B cell (primary cell): ENCODE measurements at regions of chr18 and their contacts with region 1.

Region 1: GRCh38 chr18:23586249-23587196 is at the start of gene NPC1:
- DNase-seq: peak; percentile 93
- ATAC-seq: peak; percentile 87
- H3K4me3 ChIP-seq: peak within 1 kb of the TSS; percentile 79 to 99 (median 97)
- H3K4me3 Mint-ChIP-seq: peak within 1 kb of the TSS; percentile 93
- H3K27ac ChIP-seq: peak within 1 kb of the TSS; percentile 99
- H3K27ac Mint-ChIP-seq: peak within 1 kb of the TSS; percentile 97
- H3K4me1 ChIP-seq: peaks cover 13 to 21% of the 10 kb centered on the region in 2 donors
- H3K4me1 Mint-ChIP-seq: peaks cover 23% of the 10 kb centered on the region
- H3K27me3 ChIP-seq: no peaks in the 10 kb centered on the region
- H3K27me3 Mint-ChIP-seq: no peaks in the 10 kb centered on the region
- CTCF ChIP-seq: peak; percentile 95
- total RNA-seq, gene NPC1: 44.4 and 48.5 TPM in 2 replicates

Region 2: GRCh38 chr18:22800551-22800951 is 786.0 kb before region 1 on chr18:
- CTCF ChIA-PET with region 1: interaction called, 8 read pairs
- POLR2A ChIA-PET with region 1: no interaction called
- intact Hi-C with region 1: loop called (anchors 2 kb)
- DNase-seq: no peak
- ATAC-seq: no peak
- H3K4me3 ChIP-seq: no peak overlapping the region
- H3K4me3 Mint-ChIP-seq: no peak overlapping the region
- H3K27ac ChIP-seq: no peak overlapping the region
- H3K27ac Mint-ChIP-seq: no peak overlapping the region
- H3K4me1 ChIP-seq: no peaks in the 10 kb centered on the region
- H3K4me1 Mint-ChIP-seq: no peaks in the 10 kb centered on the region
- H3K27me3 ChIP-seq: peaks cover 0 to 2% (median 0%) of the 10 kb centered on the region in 4 experiments
- H3K27me3 Mint-ChIP-seq: no peaks in the 10 kb centered on the region
- CTCF ChIP-seq: no peak

Region 3: DNA sequence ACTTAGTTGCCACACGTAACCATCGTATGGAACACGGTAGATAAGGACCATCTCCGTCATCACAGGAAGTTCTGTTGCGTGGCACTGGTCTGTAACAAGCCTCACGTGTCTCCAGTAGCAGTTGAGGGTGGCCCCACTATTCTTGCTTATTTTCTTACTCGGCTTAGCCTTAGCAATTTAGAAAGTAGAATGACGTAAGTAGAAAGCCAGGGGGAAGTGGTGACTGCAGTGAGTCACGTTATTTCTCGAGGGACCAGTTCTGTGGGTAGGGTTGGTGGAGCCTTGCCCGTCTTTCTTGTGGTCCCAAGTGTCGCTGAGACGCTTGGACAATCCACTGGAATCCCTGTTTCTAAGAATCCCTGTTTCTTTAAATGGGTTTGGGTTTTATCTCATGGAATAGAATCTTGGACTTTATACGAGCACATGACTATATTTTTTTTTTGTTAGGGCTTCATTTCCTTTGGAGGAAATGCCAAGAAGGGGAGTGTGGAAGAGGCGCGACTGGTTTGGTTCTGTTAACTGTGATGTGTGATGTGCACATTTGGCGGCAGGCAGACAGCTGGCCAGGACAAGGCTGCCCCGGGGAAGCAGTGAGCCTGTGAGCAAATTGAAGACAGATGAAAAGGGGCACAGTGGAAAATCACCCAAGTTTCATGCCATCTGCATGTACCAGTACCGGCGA is 355.0 kb before region 1 on chr18:
- CTCF ChIA-PET with region 1: no interaction called
- POLR2A ChIA-PET with region 1: no interaction called
- intact Hi-C with region 1: loop called (anchors 10 kb)
- DNase-seq: peak; percentile 96
- ATAC-seq: peak; percentile 76
- H3K4me3 ChIP-seq: peak overlapping the region in 3 of 5 experiments; percentile 4 to 14 (median 5)
- H3K4me3 Mint-ChIP-seq: peak overlapping the region; percentile 82
- H3K27ac ChIP-seq: peak overlapping the region; percentile 71 to 78
- H3K27ac Mint-ChIP-seq: peak overlapping the region; percentile 97
- H3K4me1 ChIP-seq: peaks cover 41 to 47% of the 10 kb centered on the region in 2 donors
- H3K4me1 Mint-ChIP-seq: peaks cover 66% of the 10 kb centered on the region
- H3K27me3 ChIP-seq: peaks cover 0 to 12% (median 0%) of the 10 kb centered on the region in 4 experiments
- H3K27me3 Mint-ChIP-seq: no peaks in the 10 kb centered on the region
- CTCF ChIP-seq: no peak

Region 4: GRCh38 chr18:23452728-23453679 is 133.5 kb before region 1 on chr18 and contains the start of gene RIOK3:
- CTCF ChIA-PET with region 1: interaction called, 5 read pairs
- POLR2A ChIA-PET with region 1: no interaction called
- intact Hi-C with region 1: loop called (anchors 1 kb)
- DNase-seq: peak; percentile 93
- ATAC-seq: peak; percentile 96
- H3K4me3 ChIP-seq: peak within 1 kb of the TSS; percentile 78 to 94 (median 89)
- H3K4me3 Mint-ChIP-seq: peak within 1 kb of the TSS; percentile 100
- H3K27ac ChIP-seq: peak within 1 kb of the TSS; percentile 84 to 96
- H3K27ac Mint-ChIP-seq: peak within 1 kb of the TSS; percentile 90
- H3K4me1 ChIP-seq: peaks cover 34 to 36% of the 10 kb centered on the region in 2 donors
- H3K4me1 Mint-ChIP-seq: peaks cover 59% of the 10 kb centered on the region
- H3K27me3 ChIP-seq: no peaks in the 10 kb centered on the region
- H3K27me3 Mint-ChIP-seq: no peaks in the 10 kb centered on the region
- CTCF ChIP-seq: no peak
- total RNA-seq, gene RIOK3: 83.4 and 85.1 TPM in 2 replicates

Region 5: DNA sequence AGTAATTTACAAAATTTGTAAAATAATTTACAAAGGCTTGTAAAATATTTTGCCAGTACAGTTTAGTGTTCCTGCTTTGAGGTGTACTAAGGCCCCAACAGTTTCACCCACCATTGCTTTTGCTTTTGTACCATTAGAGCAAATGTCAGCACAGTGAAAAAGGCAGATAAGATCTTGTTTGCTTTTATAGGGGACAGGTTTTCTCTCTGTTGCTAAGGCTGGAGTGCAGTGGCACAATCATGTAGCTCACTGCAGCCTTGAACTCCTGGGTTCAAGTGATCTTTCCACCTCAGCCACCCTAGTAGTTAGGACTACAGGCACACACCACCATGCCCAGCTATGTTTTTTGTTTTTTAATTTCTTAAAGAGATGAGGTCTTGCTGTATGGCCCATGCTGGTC is 19.4 kb after region 1 on chr18:
- CTCF ChIA-PET with region 1: no interaction called
- POLR2A ChIA-PET with region 1: no interaction called
- intact Hi-C with region 1: no loop called
- DNase-seq: no peak
- ATAC-seq: no peak
- H3K4me3 ChIP-seq: no peak overlapping the region
- H3K4me3 Mint-ChIP-seq: no peak overlapping the region
- H3K27ac ChIP-seq: no peak overlapping the region
- H3K27ac Mint-ChIP-seq: no peak overlapping the region
- H3K4me1 ChIP-seq: no peaks in the 10 kb centered on the region
- H3K4me1 Mint-ChIP-seq: no peaks in the 10 kb centered on the region
- H3K27me3 ChIP-seq: peaks cover 0 to 2% (median 0%) of the 10 kb centered on the region in 4 experiments
- H3K27me3 Mint-ChIP-seq: no peaks in the 10 kb centered on the region
- CTCF ChIP-seq: no peak

Region 6: DNA sequence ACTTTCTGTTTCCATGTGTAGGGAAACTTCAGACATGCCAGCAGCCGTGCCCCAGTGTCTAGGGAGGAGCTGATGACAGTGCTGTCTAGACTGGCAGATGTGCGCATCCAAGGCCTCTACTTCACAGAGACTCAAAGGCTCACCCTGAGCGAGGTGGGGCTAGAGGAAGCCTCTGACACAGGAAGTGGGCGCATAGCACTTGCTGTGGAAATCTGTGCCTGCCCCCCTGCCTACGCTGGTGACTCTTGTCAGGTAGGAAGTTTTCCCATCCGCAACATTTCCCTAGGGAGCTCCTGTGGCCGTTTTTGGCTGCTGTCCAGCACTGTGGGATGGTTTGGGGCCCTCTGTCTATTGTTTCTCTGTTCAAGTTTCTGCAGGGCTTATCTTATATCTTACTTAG is 284.9 kb after region 1 on chr18:
- CTCF ChIA-PET with region 1: no interaction called
- POLR2A ChIA-PET with region 1: no interaction called
- intact Hi-C with region 1: no loop called
- DNase-seq: peak; percentile 50
- ATAC-seq: peak; percentile 80
- H3K4me3 ChIP-seq: no peak overlapping the region
- H3K4me3 Mint-ChIP-seq: peak overlapping the region; percentile 43
- H3K27ac ChIP-seq: peak overlapping the region in 1 of 2 donors; percentile 33
- H3K27ac Mint-ChIP-seq: peak overlapping the region; percentile 69
- H3K4me1 ChIP-seq: peaks cover 22 to 33% of the 10 kb centered on the region in 2 donors
- H3K4me1 Mint-ChIP-seq: peaks cover 35% of the 10 kb centered on the region
- H3K27me3 ChIP-seq: no peaks in the 10 kb centered on the region
- H3K27me3 Mint-ChIP-seq: peaks cover 7% of the 10 kb centered on the region
- CTCF ChIP-seq: no peak

Region 7: DNA sequence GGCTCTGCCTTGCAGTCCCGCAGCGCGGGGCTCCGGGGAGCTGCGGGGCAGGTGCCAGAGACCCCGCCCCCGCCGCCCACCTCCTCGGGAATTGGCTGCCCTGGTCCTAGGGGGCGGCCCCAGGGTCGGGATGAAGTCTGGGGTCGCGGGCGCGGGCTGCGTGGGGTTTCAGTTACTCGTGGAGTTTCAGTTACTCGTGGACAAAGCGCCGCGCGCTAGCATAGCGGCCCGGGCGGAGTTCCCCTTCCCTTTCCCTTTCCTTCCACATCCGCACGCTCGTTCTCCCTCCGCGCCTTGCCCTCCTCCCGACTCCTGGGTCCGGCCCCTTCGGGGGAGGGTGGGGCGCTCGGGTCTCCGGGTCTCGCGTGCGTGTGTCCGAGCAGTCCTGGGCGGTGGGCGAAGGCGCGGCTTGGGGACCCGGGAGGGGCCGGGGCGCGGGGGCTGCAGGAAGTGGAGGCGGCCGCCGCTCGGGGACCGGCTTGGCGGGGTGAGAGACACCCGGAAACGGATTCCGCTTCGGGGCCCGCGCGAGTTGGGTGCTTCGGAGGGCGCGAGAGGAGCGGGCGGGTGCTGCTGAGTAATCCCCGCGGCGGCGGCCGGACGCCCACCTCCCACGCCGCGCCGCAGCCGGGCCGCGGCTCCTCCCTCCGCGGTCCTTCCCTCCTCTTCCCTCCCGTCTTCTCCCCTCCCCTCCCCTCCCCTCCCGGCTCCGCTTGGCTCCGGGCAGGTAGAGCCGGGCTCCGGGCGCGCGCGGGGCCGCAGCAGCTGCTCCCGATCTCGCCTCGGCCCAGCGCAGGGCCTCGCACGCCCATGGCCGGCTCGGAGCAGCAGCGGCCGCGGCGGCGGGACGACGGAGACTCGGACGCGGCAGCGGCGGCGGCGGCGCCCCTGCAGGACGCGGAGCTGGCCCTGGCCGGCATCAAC is 427.8 kb after region 1 on chr18 and contains the start of gene TTC39C:
- CTCF ChIA-PET with region 1: no interaction called
- POLR2A ChIA-PET with region 1: no interaction called
- intact Hi-C with region 1: loop called (anchors 5 kb)
- DNase-seq: peak; percentile 81
- ATAC-seq: peak; percentile 63
- H3K4me3 ChIP-seq: peak within 1 kb of the TSS; percentile 77 to 85 (median 78)
- H3K4me3 Mint-ChIP-seq: peak within 1 kb of the TSS; percentile 91
- H3K27ac ChIP-seq: peak within 1 kb of the TSS; percentile 78 to 80
- H3K27ac Mint-ChIP-seq: peak within 1 kb of the TSS; percentile 85
- H3K4me1 ChIP-seq: peaks cover 72 to 85% of the 10 kb centered on the region in 2 donors
- H3K4me1 Mint-ChIP-seq: peaks cover 76% of the 10 kb centered on the region
- H3K27me3 ChIP-seq: no peaks in the 10 kb centered on the region
- H3K27me3 Mint-ChIP-seq: no peaks in the 10 kb centered on the region
- CTCF ChIP-seq: no peak
- total RNA-seq, gene TTC39C: 44.3 and 52.9 TPM in 2 replicates